ENCODE measurements at regions of chr11 and their contacts with region 1.

Region 1: GRCh38 chr11:117843666-117844484 is 19.3 kb upstream of the FXYD2 start:
- DNase-seq: peak; percentile 84
- H3K4me3 ChIP-seq: no peak overlapping the region
- H3K27ac ChIP-seq: no peak overlapping the region
- H3K4me1 ChIP-seq: peaks cover 0 to 12% (median 0%) of the 10 kb centered on the region in 4 donors
- H3K27me3 ChIP-seq: no peaks in the 10 kb centered on the region
- CTCF ChIP-seq: peak; percentile 97 to 100 (median 99)
- EP300 ChIP-seq: no peak
- POLR2A ChIP-seq: no peak

Region 2: DNA sequence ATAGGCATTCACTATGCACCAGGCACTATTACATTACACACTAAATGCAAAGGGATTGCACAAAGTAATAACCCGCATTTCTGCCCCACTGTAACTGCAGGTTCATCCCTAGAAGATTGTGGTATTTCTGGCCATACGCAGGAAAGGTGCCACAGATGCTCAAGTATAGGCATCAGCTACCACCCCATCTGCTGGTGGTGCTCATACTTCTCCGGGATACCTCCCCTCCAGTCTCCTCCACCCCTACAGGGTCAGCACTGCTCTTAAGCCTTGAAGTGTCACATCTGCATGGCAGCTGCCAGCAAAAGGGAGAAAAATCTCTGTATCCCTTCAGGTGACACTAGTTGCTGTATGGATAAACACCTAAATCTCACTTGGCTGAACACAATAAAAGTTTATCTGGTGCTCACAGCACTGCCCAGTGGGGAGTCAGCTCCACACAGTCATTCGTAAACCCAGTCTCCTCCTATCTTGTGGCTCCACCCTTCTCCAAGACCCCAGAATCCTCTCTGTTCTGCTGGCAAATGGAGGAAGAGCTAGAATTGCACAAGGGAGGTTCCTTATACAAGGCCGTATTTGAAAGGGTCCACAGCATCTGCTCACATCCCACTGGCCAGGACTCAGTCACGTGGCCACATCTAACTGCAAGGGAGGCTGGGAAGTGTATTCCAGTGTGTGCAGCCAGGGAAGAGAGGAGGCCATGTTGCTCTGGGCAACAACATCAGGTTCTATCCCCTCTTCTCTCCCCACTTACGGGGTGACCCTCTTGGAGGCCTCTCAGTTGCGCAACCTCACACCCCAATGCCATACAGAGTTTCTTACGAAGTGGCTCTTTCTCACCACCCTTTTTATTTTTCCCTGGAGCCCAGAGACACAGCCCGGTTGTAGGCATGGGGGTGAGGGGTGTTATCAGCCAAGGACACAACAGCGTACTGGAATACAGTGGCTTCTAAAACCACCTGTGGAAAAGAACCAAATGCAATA is 1185.7 kb before region 1 on chr11:
- in situ Hi-C with region 1: no loop called
- intact Hi-C with region 1: no loop called
- DNase-seq: no peak
- H3K4me3 ChIP-seq: no peak overlapping the region
- H3K27ac ChIP-seq: no peak overlapping the region
- H3K4me1 ChIP-seq: no peaks in the 10 kb centered on the region
- H3K27me3 ChIP-seq: no peaks in the 10 kb centered on the region
- CTCF ChIP-seq: no peak
- EP300 ChIP-seq: no peak
- POLR2A ChIP-seq: no peak

Region 3: GRCh38 chr11:117256573-117256972 is 587.3 kb before region 1 on chr11:
- in situ Hi-C with region 1: no loop called
- intact Hi-C with region 1: no loop called
- DNase-seq: no peak
- H3K4me3 ChIP-seq: no peak overlapping the region
- H3K27ac ChIP-seq: no peak overlapping the region
- H3K4me1 ChIP-seq: no peaks in the 10 kb centered on the region
- H3K27me3 ChIP-seq: no peaks in the 10 kb centered on the region
- CTCF ChIP-seq: no peak
- EP300 ChIP-seq: no peak
- POLR2A ChIP-seq: no peak

Region 4: DNA sequence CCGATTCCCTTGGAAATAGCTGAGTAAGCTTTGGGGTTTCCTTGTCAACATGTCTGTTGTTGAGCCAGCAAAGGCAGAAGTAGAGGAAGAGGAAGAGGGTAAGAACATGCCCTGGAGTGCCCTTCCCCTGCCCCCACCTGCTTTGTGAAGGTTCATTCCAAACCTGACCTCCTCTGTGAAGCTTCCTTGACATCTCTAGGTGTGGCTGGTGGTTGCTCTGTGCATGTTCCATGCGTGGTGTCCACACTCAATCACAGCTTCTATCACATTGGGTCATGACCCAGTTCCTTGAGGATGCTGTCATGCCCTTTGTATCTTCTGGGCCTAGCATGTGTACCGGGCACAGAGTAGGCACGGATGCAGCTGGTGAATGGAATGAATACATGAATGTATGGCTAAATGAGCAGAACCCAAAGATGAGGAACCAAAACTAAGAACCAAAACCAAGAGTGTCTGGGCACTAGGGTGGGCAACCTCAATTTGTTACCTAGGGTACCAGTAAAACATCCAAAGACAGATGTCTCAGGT is 56.3 kb after region 1 on chr11:
- in situ Hi-C with region 1: no loop called
- intact Hi-C with region 1: loop called (anchors 5 kb)
- DNase-seq: no peak
- H3K4me3 ChIP-seq: no peak overlapping the region
- H3K27ac ChIP-seq: no peak overlapping the region
- H3K4me1 ChIP-seq: no peaks in the 10 kb centered on the region
- H3K27me3 ChIP-seq: no peaks in the 10 kb centered on the region
- CTCF ChIP-seq: no peak
- EP300 ChIP-seq: no peak
- POLR2A ChIP-seq: no peak

Region 5: GRCh38 chr11:117941163-117941707 is 97.4 kb after region 1 on chr11:
- in situ Hi-C with region 1: loop called (anchors 5 to 10 kb)
- intact Hi-C with region 1: loop called (anchors 2 kb)
- DNase-seq: no peak
- H3K4me3 ChIP-seq: no peak overlapping the region
- H3K27ac ChIP-seq: no peak overlapping the region
- H3K4me1 ChIP-seq: no peaks in the 10 kb centered on the region
- H3K27me3 ChIP-seq: no peaks in the 10 kb centered on the region
- CTCF ChIP-seq: no peak
- EP300 ChIP-seq: no peak
- POLR2A ChIP-seq: no peak

Region 6: DNA sequence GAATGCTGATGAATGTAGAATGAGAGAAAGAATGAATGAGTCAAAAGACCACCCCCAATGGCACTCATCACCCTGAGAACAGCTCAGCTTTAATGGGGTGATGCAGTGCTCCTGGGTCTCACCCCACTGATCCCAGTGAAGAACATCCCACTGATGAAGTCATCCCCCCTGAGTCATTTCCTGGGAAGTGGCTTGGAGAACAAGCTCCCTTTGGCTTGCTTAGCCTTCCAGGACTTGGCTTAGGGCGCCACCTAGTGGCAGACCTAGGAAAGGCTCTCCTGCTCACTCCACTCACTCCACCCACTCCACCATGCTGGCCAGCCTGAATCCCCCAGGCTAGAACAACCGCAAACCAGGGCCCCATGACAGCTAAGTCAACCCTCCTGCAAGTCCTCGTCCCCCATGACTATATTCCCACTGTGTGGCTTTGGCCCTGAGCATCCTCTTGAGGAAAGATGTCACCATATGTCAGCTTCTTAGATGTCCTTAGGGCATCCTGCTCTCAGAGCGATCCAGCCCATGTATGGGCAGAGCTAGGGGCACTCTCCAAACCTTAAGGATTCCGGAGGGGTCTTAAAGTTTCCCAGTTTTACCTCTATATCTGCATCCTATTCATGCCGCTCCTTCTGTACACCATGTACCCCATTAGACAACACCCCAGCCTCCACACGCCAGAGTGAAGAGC is 103.1 kb after region 1 on chr11:
- in situ Hi-C with region 1: loop called (anchors 5 to 10 kb)
- intact Hi-C with region 1: loop called (anchors 2 kb)
- DNase-seq: peak; percentile 89
- H3K4me3 ChIP-seq: no peak overlapping the region
- H3K27ac ChIP-seq: no peak overlapping the region
- H3K4me1 ChIP-seq: peaks cover 0 to 3% (median 0%) of the 10 kb centered on the region in 4 donors
- H3K27me3 ChIP-seq: no peaks in the 10 kb centered on the region
- CTCF ChIP-seq: peak; percentile 95 to 98 (median 97)
- EP300 ChIP-seq: no peak
- POLR2A ChIP-seq: no peak

Measured in transverse colon (tissue), 4 donors.